ENCODE measurements at regions of chr3 and their contacts with region 1.

Region 1: DNA sequence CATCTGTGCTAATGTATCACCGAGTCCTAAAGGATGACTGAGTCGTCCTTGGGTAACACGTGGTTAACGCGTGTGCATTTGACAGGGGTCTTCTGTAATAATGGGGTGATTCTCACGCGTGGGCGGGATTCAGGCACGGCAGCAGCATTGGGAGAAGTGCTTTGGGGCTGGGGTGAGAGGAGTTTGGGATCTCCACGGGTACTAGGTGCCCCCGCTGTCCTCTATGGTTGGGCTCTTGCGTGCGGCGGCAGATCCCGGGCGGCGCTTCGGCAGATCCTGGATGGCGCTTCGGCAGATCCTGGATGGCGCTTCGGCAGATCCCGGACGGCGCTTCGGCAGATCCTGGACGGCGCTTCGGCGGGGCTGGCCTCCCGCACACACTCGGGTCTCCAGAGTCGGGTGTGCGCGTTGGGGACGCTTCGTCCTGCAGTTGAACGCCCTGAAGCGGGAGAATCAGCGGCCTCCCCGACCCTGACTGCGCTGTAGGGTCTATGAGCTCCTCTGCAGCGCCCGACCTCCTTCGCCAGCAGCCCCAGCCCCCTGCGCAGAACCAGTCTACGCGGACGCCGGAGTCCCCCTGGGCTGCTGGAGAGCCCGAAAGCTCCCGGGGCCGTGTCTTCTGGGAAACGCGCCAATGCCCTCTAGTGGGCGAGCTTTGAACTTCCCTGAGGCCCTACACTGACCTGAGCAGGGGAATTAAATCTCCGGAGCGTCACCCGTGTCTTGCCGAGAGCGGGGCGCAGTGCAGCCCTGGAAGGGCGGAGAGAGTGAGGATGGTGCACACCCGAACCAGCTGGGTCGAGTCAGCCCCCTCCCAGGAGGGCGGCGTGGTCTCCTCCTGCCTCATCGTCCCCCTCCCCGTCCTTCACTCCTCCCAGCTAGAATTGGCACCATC is 48.1 kb upstream of the EPHB3 start:
- DNase-seq: peak in 1 of 2 donors; percentile 90
- H3K4me3 ChIP-seq: peak overlapping the region; percentile 53 to 65
- H3K27ac ChIP-seq: no peak overlapping the region
- H3K4me1 ChIP-seq: peaks cover 0 to 5% of the 10 kb centered on the region in 2 donors
- H3K27me3 ChIP-seq: no peaks in the 10 kb centered on the region
- CTCF ChIP-seq: peak; percentile 77 to 92 (median 84)

Region 2: GRCh38 chr3:184417619-184418327 is 95.8 kb before region 1 on chr3:
- intact Hi-C with region 1: loop called (anchors 2 kb)
- DNase-seq: peak in 1 of 2 donors; percentile 72
- H3K4me3 ChIP-seq: no peak overlapping the region
- H3K27ac ChIP-seq: no peak overlapping the region
- H3K4me1 ChIP-seq: no peaks in the 10 kb centered on the region
- H3K27me3 ChIP-seq: no peaks in the 10 kb centered on the region
- CTCF ChIP-seq: peak; percentile 70 to 86 (median 71)

Measured in ascending aorta (tissue), 2 donors.